Mammary epithelial cell (primary cell): ENCODE measurements at regions of chr10 and their contacts with region 1.

Region 1: GRCh38 chr10:132396495-132397035 is 435 bp upstream of the PWWP2B start:
- DNase-seq: no peak
- H3K4me3 ChIP-seq: peak overlapping the region in 2 of 3 experiments; percentile 59 to 66
- H3K27ac ChIP-seq: no peak overlapping the region
- H3K4me1 ChIP-seq: peaks cover 26% of the 10 kb centered on the region
- H3K27me3 ChIP-seq: no peaks in the 10 kb centered on the region
- CTCF ChIP-seq: peak in 1 of 2 donors; percentile 12

Region 2: GRCh38 chr10:132423951-132424861 is 27.6 kb after region 1 on chr10:
- CTCF ChIA-PET with region 1: no interaction called
- dilution Hi-C with region 1: no loop called
- in situ Hi-C with region 1: no loop called
- intact Hi-C with region 1: loop called (anchors 2 kb)
- DNase-seq: peak; percentile 57
- H3K4me3 ChIP-seq: no peak overlapping the region
- H3K27ac ChIP-seq: no peak overlapping the region
- H3K4me1 ChIP-seq: peaks cover 13% of the 10 kb centered on the region
- H3K27me3 ChIP-seq: no peaks in the 10 kb centered on the region
- CTCF ChIP-seq: no peak

Region 3: GRCh38 chr10:132452631-132453469 is 56.3 kb after region 1 on chr10:
- CTCF ChIA-PET with region 1: no interaction called
- dilution Hi-C with region 1: no loop called
- in situ Hi-C with region 1: loop called (anchors 5 kb)
- intact Hi-C with region 1: loop called (anchors 2 kb)
- DNase-seq: peak; percentile 79
- H3K4me3 ChIP-seq: peak overlapping the region in 1 of 3 experiments; percentile 16
- H3K27ac ChIP-seq: no peak overlapping the region
- H3K4me1 ChIP-seq: peaks cover 17% of the 10 kb centered on the region
- H3K27me3 ChIP-seq: no peaks in the 10 kb centered on the region
- CTCF ChIP-seq: peak; percentile 69 to 88